WTC11 (cell line): ENCODE measurements at regions of chr22 and their contacts with region 1.

Region 1: GRCh38 chr22:22235558-22235957 is 9.0 kb upstream of the VPREB1 start:
- DNase-seq: peak; percentile 57
- ATAC-seq: no peak
- H3K4me3 Mint-ChIP-seq: no peak overlapping the region
- H3K27ac Mint-ChIP-seq: no peak overlapping the region
- H3K4me1 Mint-ChIP-seq: no peaks in the 10 kb centered on the region
- H3K27me3 Mint-ChIP-seq: peaks cover 100% of the 10 kb centered on the region
- CTCF ChIP-seq: peak; percentile 44

Region 2: GRCh38 chr22:22201185-22201929 is 34.2 kb before region 1 on chr22:
- CTCF ChIA-PET with region 1: interaction called, 28 read pairs
- POLR2A ChIA-PET with region 1: no interaction called
- DNase-seq: peak; percentile 50
- ATAC-seq: peak; percentile 76
- H3K4me3 Mint-ChIP-seq: no peak overlapping the region
- H3K27ac Mint-ChIP-seq: no peak overlapping the region
- H3K4me1 Mint-ChIP-seq: peaks cover 4% of the 10 kb centered on the region
- H3K27me3 Mint-ChIP-seq: peaks cover 100% of the 10 kb centered on the region
- CTCF ChIP-seq: peak; percentile 44; the same call in 1 of the 2 replicates

Region 3: GRCh38 chr22:22207845-22208564 is 27.6 kb before region 1 on chr22:
- CTCF ChIA-PET with region 1: interaction called, 28 read pairs
- POLR2A ChIA-PET with region 1: no interaction called
- DNase-seq: peak; percentile 86
- ATAC-seq: peak; percentile 90
- H3K4me3 Mint-ChIP-seq: no peak overlapping the region
- H3K27ac Mint-ChIP-seq: no peak overlapping the region
- H3K4me1 Mint-ChIP-seq: no peaks in the 10 kb centered on the region
- H3K27me3 Mint-ChIP-seq: peaks cover 96% of the 10 kb centered on the region
- CTCF ChIP-seq: peak; percentile 43

Region 4: DNA sequence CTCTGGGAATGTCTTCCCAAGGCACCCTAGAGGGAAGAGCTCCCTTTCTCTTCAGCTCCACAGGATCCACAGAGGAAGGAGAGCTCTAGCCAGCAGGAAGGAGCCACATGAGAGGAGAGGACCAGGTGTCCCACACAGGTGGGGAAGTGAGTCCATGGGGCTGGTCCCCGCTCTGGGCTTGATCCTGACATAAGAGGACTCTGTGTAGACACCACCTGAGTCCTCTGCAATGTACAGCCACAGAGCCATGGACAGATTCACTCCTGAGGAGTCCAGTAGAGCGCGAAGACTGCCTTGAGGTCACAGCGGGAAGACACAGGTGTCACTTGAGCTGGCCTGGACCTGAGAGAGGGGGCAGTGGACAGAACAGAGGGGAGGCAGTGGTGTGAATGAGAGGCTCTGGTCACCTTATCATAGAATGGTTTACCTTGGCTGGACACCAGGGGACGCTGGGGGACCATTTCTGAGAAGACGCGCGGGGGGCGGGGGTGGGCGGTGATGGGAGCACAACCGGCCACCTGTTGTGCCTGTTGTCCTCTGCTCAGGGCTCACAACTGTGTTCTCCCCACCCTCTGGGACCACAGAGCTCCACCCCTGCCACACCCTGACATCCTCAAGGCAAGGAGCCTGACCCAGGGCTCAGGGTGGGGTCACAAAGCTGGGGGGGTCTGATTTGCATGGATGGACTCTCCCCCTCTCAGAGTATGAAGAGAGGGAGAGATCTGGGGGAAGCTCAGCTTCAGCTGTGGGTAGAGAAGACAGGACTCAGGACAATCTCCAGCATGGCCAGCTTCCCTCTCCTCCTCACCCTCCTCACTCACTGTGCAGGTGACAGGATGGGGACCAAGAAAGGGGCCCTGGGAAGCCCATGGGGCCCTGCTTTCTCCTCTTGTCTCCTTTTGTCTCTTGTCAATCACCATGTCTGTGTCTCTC is 144.8 kb after region 1 on chr22:
- CTCF ChIA-PET with region 1: no interaction called
- POLR2A ChIA-PET with region 1: no interaction called
- DNase-seq: peak; percentile 72
- ATAC-seq: peak; percentile 81
- H3K4me3 Mint-ChIP-seq: no peak overlapping the region
- H3K27ac Mint-ChIP-seq: no peak overlapping the region
- H3K4me1 Mint-ChIP-seq: no peaks in the 10 kb centered on the region
- H3K27me3 Mint-ChIP-seq: peaks cover 100% of the 10 kb centered on the region
- CTCF ChIP-seq: 0 out of 2 replicates have a peak, but pooled peaks have one; percentile 24